ENCODE measurements at regions of chr6 and their contacts with region 1.

Region 1: GRCh38 chr6:56292505-56293181 is 45.3 kb upstream of the COL21A1 start:
- DNase-seq: peak; percentile 62
- ATAC-seq: peak; percentile 96
- H3K4me3 ChIP-seq: no peak overlapping the region
- H3K27ac ChIP-seq: no peak overlapping the region
- H3K4me1 ChIP-seq: no peaks in the 10 kb centered on the region
- H3K27me3 ChIP-seq: peaks cover 0 to 18% of the 10 kb centered on the region in 2 experiments; a peak in 3 of 5 replicates
- CTCF ChIP-seq: peak; percentile 80
- EP300 ChIP-seq: no peak
- POLR2A ChIP-seq: no peak
- RAD21 ChIP-seq: peak; percentile 72

Region 2: DNA sequence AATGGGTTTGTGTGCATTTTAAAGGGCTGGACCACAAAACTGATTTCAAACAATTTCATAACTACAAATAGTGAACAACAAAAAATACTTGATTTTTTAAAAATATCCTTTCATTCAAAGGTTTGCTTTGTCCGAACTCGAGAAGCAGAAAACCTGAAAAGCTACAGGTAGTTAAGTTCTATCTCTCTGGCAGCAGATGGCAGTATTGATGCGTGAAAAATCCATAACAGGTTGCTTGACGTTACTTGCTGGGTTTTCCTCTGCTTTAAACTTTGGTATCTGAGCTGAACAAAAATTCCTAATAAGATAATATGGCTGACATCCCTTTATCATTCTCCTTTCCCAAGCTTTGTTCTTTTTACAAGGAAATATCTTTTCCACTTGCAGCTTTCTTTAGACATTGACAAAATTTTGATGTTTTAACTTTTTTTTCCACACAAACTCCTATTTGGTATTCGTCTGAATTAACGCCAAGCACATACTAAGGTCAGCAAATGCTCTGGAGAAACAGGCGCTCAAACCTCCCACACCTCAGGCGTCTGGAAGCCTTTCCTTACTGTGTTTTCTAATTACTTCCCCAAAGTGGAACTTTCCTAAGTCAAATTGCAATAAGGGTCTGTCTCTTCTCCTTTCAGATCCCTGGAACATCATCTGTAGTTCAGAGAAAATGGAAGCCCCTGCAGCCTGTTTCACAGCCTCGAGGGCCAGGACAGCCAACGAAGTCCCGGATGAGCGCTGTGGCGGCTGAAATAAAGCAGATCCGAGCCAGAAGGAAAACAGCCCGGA is 1015.7 kb before region 1 on chr6:
- CTCF ChIA-PET with region 1: interaction called, 5 read pairs
- POLR2A ChIA-PET with region 1: no interaction called
- in situ Hi-C with region 1: loop called (anchors 25 kb)
- intact Hi-C with region 1: no loop called
- DNase-seq: peak; percentile 71
- ATAC-seq: peak; percentile 83
- H3K4me3 ChIP-seq: no peak overlapping the region
- H3K27ac ChIP-seq: no peak overlapping the region
- H3K4me1 ChIP-seq: no peaks in the 10 kb centered on the region
- H3K27me3 ChIP-seq: no peaks in the 10 kb centered on the region
- CTCF ChIP-seq: peak; percentile 76
- EP300 ChIP-seq: no peak
- POLR2A ChIP-seq: no peak
- RAD21 ChIP-seq: peak; percentile 29; the same call in 1 of the 2 replicates

Region 3: GRCh38 chr6:55445648-55446204 is 846.9 kb before region 1 on chr6:
- CTCF ChIA-PET with region 1: interaction called, 7 read pairs
- POLR2A ChIA-PET with region 1: no interaction called
- in situ Hi-C with region 1: loop called (anchors 10 kb)
- intact Hi-C with region 1: loop called (anchors 1 kb)
- DNase-seq: peak; percentile 12
- ATAC-seq: peak; percentile 59
- H3K4me3 ChIP-seq: no peak overlapping the region
- H3K27ac ChIP-seq: no peak overlapping the region
- H3K4me1 ChIP-seq: no peaks in the 10 kb centered on the region
- H3K27me3 ChIP-seq: no peaks in the 10 kb centered on the region
- CTCF ChIP-seq: peak; percentile 64
- EP300 ChIP-seq: no peak
- POLR2A ChIP-seq: no peak
- RAD21 ChIP-seq: 0 out of 2 replicates have a peak, but pooled peaks have one; percentile 53

Region 4: GRCh38 chr6:55617272-55617671 is 675.4 kb before region 1 on chr6:
- CTCF ChIA-PET with region 1: interaction called, 7 read pairs
- POLR2A ChIA-PET with region 1: no interaction called
- in situ Hi-C with region 1: loop called (anchors 25 kb)
- intact Hi-C with region 1: loop called (anchors 1 kb)
- DNase-seq: peak; percentile 48
- ATAC-seq: peak; percentile 98
- H3K4me3 ChIP-seq: no peak overlapping the region
- H3K27ac ChIP-seq: no peak overlapping the region
- H3K4me1 ChIP-seq: no peaks in the 10 kb centered on the region
- H3K27me3 ChIP-seq: no peaks in the 10 kb centered on the region
- CTCF ChIP-seq: peak; percentile 81
- EP300 ChIP-seq: no peak
- POLR2A ChIP-seq: no peak
- RAD21 ChIP-seq: 0 out of 2 replicates have a peak, but pooled peaks have one; percentile 17

Region 5: GRCh38 chr6:55980627-55981211 is 311.9 kb before region 1 on chr6:
- CTCF ChIA-PET with region 1: interaction called, 60 read pairs
- POLR2A ChIA-PET with region 1: no interaction called
- in situ Hi-C with region 1: loop called (anchors 5 kb)
- intact Hi-C with region 1: loop called (anchors 1 kb)
- DNase-seq: peak; percentile 42
- ATAC-seq: peak; percentile 57; the same call in 2 of the 3 replicates
- H3K4me3 ChIP-seq: no peak overlapping the region
- H3K27ac ChIP-seq: no peak overlapping the region
- H3K4me1 ChIP-seq: no peaks in the 10 kb centered on the region
- H3K27me3 ChIP-seq: no peaks in the 10 kb centered on the region
- CTCF ChIP-seq: peak; percentile 76
- EP300 ChIP-seq: no peak
- POLR2A ChIP-seq: no peak
- RAD21 ChIP-seq: peak; percentile 64; the same call in 1 of the 2 replicates

Region 6: GRCh38 chr6:56021943-56022342 is 270.7 kb before region 1 on chr6:
- CTCF ChIA-PET with region 1: interaction called, 4 read pairs
- POLR2A ChIA-PET with region 1: no interaction called
- in situ Hi-C with region 1: no loop called
- intact Hi-C with region 1: loop called (anchors 1 kb)
- DNase-seq: no peak
- ATAC-seq: no peak
- H3K4me3 ChIP-seq: no peak overlapping the region
- H3K27ac ChIP-seq: no peak overlapping the region
- H3K4me1 ChIP-seq: no peaks in the 10 kb centered on the region
- H3K27me3 ChIP-seq: no peaks in the 10 kb centered on the region
- CTCF ChIP-seq: no peak
- EP300 ChIP-seq: no peak
- POLR2A ChIP-seq: no peak
- RAD21 ChIP-seq: no peak